ENCODE measurements at regions of chr3 and their contacts with region 1.

Region 1: GRCh38 chr3:69161587-69162307 is 39.4 kb upstream of the LMOD3 start:
- DNase-seq: peak; percentile 17 to 27
- H3K4me3 ChIP-seq: no peak overlapping the region
- H3K27ac ChIP-seq: no peak overlapping the region
- H3K4me1 ChIP-seq: no peaks in the 10 kb centered on the region
- H3K27me3 ChIP-seq: no peaks in the 10 kb centered on the region
- CTCF ChIP-seq: peak; percentile 85 to 95 (median 94)
- POLR2A ChIP-seq: no peak

Region 2: DNA sequence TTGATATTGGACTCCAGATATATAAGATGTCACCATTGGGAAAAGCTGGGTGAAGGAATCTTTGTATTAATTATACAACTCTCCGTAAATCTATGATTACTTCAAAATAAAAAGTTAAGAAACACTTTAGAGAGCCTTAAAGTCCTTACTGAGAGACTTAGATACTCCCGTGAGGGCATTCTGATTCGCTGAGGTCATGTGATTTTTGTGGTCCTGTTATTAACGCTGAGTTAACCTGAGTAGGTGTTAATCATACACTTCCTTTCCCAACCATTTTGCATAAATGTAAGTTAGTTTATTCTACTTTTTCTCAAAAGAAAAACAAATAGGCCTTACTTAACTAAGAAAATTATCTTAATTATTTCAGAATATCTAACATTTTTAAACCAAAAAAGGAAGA is 27.7 kb after region 1 on chr3:
- intact Hi-C with region 1: no loop called
- DNase-seq: no peak
- H3K4me3 ChIP-seq: no peak overlapping the region
- H3K27ac ChIP-seq: no peak overlapping the region
- H3K4me1 ChIP-seq: no peaks in the 10 kb centered on the region
- H3K27me3 ChIP-seq: no peaks in the 10 kb centered on the region
- CTCF ChIP-seq: no peak
- POLR2A ChIP-seq: no peak

Region 3: DNA sequence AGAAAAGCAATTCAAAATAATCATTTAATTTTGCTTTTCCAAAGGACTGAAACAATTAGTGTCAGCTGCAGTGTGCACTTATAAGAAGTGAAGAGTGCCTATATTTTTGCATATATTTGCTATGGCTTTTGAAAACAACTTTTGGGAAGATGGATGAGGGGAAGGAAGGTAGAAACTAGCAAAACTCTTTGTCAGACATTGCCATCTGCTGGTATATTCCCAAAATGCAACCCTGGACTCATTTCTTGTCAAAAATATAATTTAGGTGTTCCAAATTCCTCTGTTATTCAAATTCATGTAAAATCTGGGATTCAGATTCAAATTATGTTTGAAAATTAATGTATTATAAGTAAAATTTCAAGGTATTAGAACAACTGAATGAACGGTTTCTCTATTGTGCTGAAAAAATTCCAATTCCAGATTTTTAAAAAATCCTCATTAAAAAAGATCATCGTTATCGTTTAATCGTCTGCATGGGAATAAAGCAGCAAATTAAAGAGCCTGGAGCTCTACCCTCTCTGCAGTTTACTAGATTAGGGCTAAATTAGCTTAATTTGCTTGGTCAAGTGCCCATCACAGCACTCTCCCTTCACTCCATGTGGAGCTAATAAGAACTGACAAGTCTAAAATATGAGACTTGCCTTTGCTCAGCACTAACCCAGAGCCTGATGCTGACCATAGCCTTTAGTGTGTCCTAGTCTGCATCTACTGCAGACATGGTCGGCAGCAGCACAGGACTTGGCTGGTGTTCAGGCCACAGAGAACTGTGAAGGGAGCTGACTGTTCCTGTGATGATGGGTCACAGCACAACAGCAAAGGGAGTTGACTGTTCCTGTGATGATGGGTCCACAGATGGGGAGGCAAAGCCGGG is 509.6 kb after region 1 on chr3:
- intact Hi-C with region 1: loop called (anchors 10 kb)
- DNase-seq: peak; percentile 45 to 61
- H3K4me3 ChIP-seq: no peak overlapping the region
- H3K27ac ChIP-seq: peak overlapping the region; percentile 14 to 48
- H3K4me1 ChIP-seq: no peaks in the 10 kb centered on the region
- H3K27me3 ChIP-seq: no peaks in the 10 kb centered on the region
- CTCF ChIP-seq: peak; percentile 65 to 86 (median 79)
- POLR2A ChIP-seq: no peak